Activated CD8-positive, alpha-beta memory T cell treated with anti-CD3 and anti-CD28 coated beads, Interleukin-2, amount 10 ng/mL, durations not matched to agents 7 days and 5 days (primary cell): ENCODE measurements at regions of chr19 and their contacts with region 1.

Region 1: DNA sequence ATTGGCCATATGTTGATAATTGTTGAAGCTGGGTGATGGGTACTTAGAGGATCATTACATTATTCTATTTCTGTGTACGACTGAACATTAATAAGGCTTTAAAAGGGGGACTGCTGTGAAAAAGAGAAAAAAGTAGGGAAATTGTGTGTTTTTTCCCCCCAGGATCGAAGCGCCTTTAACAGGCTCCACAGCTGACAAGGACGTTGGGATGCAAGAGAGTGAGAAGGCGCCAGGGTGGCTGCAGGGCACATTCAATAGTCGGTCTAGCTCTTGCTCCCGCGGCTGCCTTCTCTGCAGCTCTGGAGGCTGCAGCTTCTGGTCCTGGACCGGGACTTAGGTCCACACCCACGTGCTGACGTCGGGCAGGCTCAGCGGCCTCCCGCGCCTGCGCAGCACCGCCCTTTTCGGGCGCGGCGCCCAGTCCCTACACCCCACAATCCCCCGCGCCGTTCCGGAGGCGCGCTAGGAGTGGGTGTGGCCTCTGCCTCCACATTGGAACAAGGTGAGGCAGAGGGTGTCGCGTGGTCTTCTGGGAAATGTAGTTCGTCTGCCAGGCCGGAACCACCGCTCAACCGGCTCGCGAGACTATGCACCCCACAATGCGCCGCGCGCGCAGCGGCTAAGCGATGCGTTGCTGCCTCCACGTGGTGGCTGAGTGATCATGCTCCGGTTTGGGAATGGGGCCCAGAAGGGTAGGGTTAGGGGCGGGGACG is 4.9 kb upstream of the LRFN3 start:
- DNase-seq: peak; percentile 100
- ATAC-seq: peak; percentile 95
- H3K4me3 Mint-ChIP-seq: peak overlapping the region; percentile 70
- H3K27ac Mint-ChIP-seq: peak overlapping the region; percentile 91
- H3K4me1 Mint-ChIP-seq: peaks cover 29% of the 10 kb centered on the region
- H3K27me3 Mint-ChIP-seq: no peaks in the 10 kb centered on the region

Region 2: GRCh38 chr19:35882114-35882832 is 49.0 kb before region 1 on chr19:
- CTCF ChIA-PET with region 1: interaction called, 88 read pairs
- DNase-seq: peak; percentile 53
- ATAC-seq: peak; percentile 37
- H3K4me3 Mint-ChIP-seq: no peak overlapping the region
- H3K27ac Mint-ChIP-seq: no peak overlapping the region
- H3K4me1 Mint-ChIP-seq: peaks cover 6% of the 10 kb centered on the region
- H3K27me3 Mint-ChIP-seq: peaks cover 20% of the 10 kb centered on the region

Region 3: GRCh38 chr19:35899547-35900214 is 31.6 kb before region 1 on chr19:
- CTCF ChIA-PET with region 1: interaction called, 12 read pairs
- DNase-seq: peak; percentile 92
- ATAC-seq: peak; percentile 44
- H3K4me3 Mint-ChIP-seq: peak overlapping the region; percentile 78
- H3K27ac Mint-ChIP-seq: peak overlapping the region; percentile 94
- H3K4me1 Mint-ChIP-seq: peaks cover 35% of the 10 kb centered on the region
- H3K27me3 Mint-ChIP-seq: no peaks in the 10 kb centered on the region

Region 4: GRCh38 chr19:35911790-35912189 is 19.5 kb before region 1 on chr19:
- CTCF ChIA-PET with region 1: interaction called, 12 read pairs
- DNase-seq: no peak
- ATAC-seq: peak; percentile 16
- H3K4me3 Mint-ChIP-seq: no peak overlapping the region
- H3K27ac Mint-ChIP-seq: no peak overlapping the region
- H3K4me1 Mint-ChIP-seq: peaks cover 23% of the 10 kb centered on the region
- H3K27me3 Mint-ChIP-seq: no peaks in the 10 kb centered on the region

Region 5: DNA sequence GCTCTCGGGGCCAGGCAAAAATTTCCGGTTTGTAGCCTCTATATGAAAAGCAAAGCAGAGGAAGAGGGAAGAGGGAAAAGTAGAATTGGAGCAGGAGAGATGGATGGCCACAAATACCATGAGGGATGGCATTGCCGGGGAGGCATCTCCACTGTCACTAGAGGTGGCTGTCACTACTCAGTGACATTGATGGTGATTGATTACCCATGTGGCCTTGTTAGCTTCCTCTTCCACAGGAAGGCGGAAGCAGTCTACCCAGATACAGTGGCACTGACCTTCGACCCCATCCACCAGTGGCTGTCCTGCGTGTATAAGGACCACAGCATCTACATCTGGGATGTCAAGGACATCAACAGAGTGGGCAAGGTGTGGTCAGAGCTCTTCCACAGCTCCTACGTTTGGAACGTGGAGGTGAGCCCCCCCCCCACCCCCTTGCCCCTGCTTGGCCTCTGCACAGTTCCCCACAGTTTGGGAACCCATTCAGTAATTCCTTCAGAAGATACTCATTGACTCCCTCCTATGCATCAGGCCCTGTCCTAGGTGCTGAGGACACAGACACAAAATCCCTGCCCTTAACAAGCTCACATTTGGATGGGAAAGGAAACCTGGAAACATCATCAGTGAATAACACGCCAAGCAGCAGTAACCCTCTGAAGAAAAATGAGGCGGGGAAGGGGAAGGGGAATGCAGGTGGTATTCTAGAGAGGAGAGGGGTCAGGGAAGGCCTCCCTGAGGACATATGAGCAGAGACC is 142.0 kb after region 1 on chr19:
- CTCF ChIA-PET with region 1: no interaction called
- DNase-seq: no peak
- ATAC-seq: no peak
- H3K4me3 Mint-ChIP-seq: no peak overlapping the region
- H3K27ac Mint-ChIP-seq: no peak overlapping the region
- H3K4me1 Mint-ChIP-seq: no peaks in the 10 kb centered on the region
- H3K27me3 Mint-ChIP-seq: no peaks in the 10 kb centered on the region